Dendritic cell treated with granulocyte-macrophage colony-stimulating factor and Interleukin-4, amounts not matched to agents 40 ng/mL and 50 ng/mL, for 4 days (primary cell): ENCODE measurements at regions of chr3 and their contacts with region 1.

Region 1: DNA sequence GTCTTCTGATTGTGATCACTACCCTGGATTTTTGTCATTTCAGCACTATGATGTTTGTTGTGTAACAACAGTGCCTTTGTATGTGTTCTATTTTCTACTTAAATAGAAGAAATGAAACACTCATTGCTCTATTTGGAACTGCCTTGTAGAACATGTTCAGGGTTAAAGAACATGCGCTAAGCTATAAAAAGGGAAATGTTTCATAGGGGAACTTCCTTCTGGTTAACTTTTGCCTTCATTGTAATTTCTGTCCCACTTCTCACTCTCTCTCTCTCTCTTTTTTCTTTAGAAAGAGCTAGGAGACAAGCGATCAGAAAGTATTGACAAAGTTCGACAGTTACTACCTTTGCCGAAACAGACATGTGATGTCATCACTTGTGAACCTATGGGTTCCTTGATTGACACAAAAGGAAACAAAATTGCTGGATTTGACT is at the start of gene P2RY12:
- H3K4me3 Mint-ChIP-seq: peak within 1 kb of the TSS; percentile 65
- H3K27ac Mint-ChIP-seq: peak within 1 kb of the TSS; percentile 65
- H3K4me1 Mint-ChIP-seq: peaks cover 60% of the 10 kb centered on the region
- H3K27me3 Mint-ChIP-seq: no peaks in the 10 kb centered on the region

Region 2: GRCh38 chr3:151345859-151346258 is 38.9 kb before region 1 on chr3:
- intact Hi-C with region 1: loop called (anchors 5 kb)
- H3K4me3 Mint-ChIP-seq: peak overlapping the region; percentile 61
- H3K27ac Mint-ChIP-seq: peak overlapping the region; percentile 82
- H3K4me1 Mint-ChIP-seq: peaks cover 47% of the 10 kb centered on the region
- H3K27me3 Mint-ChIP-seq: no peaks in the 10 kb centered on the region

Region 3: DNA sequence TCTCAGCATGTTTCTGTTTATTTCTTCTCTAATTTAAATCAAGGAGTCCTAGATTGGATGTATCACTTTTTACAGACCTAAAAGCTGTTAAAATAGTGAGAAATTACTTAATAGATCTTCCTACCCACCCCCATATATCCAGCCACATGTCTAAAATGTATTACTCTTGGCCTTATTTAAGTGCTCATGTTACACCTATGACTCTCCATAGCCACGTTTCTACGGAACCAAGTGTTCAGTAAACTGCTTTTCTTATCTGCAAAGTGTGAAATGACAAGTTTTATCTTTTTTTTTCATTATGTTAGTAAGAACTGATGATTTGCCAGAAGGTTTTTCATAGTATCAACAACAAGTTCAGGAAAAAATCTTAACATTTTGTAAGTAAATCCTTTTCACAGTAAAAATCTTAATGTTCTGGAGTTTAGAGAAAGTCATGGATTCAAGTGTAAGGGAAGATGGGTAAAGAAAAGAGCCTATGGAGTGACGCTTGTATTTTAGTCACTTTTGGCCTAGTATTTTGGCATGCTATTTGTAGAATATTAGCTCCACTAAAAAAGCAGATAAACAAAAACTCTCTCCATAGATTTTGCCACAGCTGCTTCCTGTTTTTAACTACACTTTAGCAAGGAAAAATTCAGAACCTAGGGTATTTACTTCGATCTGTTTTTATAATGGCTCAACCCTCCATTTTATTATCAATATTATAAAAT is 117.3 kb after region 1 on chr3:
- intact Hi-C with region 1: no loop called
- H3K4me3 Mint-ChIP-seq: no peak overlapping the region
- H3K27ac Mint-ChIP-seq: no peak overlapping the region
- H3K4me1 Mint-ChIP-seq: no peaks in the 10 kb centered on the region
- H3K27me3 Mint-ChIP-seq: no peaks in the 10 kb centered on the region